Lower leg skin (tissue), 4 donors: ENCODE measurements at regions of chr12 and their contacts with region 1.

Region 1: DNA sequence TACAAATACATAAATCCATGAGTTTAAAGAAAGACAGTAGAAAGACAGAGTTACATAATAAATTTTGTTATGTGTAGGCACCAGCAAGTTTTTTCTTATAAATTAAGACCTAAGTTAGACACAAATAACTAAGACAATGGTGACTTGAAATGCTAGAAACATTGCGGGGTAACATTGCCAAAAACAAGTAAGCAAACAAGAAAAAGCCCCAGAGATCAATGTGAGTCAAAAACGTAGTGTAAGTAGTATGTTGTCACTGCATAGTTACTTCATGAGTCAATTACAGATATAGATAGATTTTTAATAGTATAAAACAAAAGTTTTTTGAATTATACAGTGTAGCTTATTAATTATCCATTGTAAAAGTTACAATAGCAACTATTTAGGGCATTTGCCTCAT is 83.4 kb downstream of the CNTN1 start:
- DNase-seq: no peak
- H3K4me3 ChIP-seq: no peak overlapping the region
- CTCF ChIP-seq: no peak
- POLR2A ChIP-seq: no peak

Region 2: DNA sequence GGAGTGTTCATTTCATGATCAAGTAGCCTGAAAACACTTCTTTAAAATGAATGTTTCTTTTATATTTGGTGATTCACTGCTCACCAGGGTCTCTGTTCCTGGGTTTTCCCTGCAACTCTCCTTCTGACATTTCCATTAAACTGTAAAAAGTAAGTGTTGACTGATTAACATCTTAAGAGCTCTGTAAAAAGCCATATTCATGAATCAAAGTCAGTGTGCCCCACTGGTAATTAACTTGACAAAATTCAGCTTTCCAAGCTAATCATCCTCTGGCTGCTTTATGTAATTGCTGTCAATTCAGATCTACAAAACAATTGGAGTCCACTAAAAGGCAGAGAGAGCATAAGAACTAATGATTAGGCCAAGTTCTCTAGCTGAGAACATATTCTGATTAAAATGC is 41.8 kb before region 1 on chr12:
- intact Hi-C with region 1: no loop called
- DNase-seq: no peak
- H3K4me3 ChIP-seq: no peak overlapping the region
- CTCF ChIP-seq: no peak
- POLR2A ChIP-seq: no peak

Region 3: DNA sequence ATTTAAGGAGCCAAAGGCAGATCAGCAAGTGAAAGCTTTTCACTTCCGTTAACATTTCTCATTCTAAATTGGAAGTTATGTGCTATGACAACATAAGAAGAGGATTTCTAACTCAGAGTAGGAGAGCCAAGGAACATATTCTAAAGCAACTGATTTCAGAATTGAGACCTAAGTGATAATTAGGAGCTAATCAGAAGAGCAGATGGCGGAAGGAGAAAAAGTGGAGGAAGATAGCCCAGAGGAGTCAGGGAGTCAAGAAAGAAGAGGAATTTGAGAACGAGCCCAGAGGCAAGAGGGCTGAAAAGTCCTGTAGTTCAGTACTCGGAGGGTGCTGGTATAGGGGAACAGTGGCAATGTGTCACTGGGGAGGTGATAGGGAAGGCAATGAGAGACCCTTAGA is 78.9 kb after region 1 on chr12:
- intact Hi-C with region 1: loop called (anchors 2 kb)
- DNase-seq: no peak
- H3K4me3 ChIP-seq: no peak overlapping the region
- CTCF ChIP-seq: no peak
- POLR2A ChIP-seq: no peak